Vagina (tissue), 2 donors: ENCODE measurements at regions of chr4 and their contacts with region 1.

Region 1: DNA sequence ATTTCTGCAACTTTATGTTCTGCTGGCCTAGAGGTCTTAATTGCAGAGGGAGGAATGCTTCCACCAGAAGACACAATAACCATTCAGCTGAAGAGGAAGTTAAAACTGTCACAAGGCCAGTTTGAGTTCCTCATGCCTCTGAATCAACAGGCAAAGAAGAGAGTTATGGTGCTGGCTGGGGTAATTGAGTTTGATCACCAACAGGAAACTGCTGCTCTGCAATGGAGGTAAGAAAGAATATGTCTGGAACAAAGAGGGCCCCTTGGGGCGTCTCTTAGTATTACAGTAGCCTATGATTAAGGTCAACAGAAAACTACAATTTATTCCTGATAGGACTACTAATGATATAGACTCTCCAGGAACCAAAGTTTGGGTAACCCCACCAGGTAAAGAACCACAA is 744.0 kb downstream of the FSTL5 start:
- DNase-seq: no peak
- H3K4me3 ChIP-seq: no peak overlapping the region
- H3K27ac ChIP-seq: no peak overlapping the region
- H3K4me1 ChIP-seq: no peaks in the 10 kb centered on the region
- H3K27me3 ChIP-seq: no peaks in the 10 kb centered on the region
- CTCF ChIP-seq: no peak
- POLR2A ChIP-seq: no peak

Region 2: GRCh38 chr4:161448550-161449180 is 28.8 kb after region 1 on chr4:
- intact Hi-C with region 1: loop called (anchors 1 kb)
- DNase-seq: no peak
- H3K4me3 ChIP-seq: no peak overlapping the region
- H3K27ac ChIP-seq: no peak overlapping the region
- H3K4me1 ChIP-seq: no peaks in the 10 kb centered on the region
- H3K27me3 ChIP-seq: no peaks in the 10 kb centered on the region
- CTCF ChIP-seq: no peak
- POLR2A ChIP-seq: no peak